ENCODE measurements at regions of chr10 and their contacts with region 1.

Region 1: DNA sequence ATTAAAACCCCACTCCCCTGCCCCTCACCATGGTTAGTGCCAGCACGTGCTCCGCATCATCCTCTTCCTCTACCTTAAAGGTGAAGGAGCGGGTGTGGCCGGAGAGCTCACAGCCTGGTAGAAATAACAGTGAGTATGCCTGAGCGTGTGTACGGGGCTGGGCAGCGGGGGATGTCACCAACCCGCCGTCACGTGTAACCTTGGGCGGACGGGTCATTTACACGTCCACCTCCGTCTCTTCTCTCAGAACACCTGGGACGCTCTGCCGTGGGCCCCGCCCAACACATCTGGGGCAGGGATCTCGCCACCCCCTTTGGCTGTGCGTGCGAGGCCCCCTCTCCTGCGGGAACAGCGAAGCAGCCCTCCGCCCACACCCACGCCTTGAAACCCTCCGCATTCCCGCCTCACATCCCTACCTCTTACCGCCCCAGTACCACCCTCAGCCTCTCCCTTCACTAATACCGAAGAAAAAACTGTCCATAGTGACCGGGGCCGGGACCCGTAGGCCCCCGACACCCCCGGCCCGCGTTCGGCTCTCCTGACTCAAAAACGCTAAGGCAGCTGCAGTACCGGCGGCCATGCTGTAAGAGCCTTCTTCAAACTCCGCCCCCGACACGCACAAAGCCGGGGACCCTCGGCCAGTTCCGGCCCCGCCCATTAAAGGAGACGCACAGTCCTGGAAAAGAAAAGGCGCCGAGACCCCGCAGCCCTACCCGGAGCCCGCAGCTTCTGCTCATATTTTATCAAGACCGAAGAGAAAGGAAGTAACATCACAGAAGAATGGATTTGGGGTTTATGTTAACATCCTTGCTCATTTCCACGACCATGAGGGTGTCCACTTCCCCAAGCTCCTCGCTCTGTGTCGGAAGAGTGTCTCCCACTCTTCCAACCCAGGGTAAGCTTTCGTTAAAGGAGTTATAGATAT is at the start of gene NPM3:
- DNase-seq: peak in 8 of 9 donors; percentile 68 to 84 (median 77)
- ATAC-seq: peak; percentile 82
- H3K4me3 ChIP-seq: peak within 1 kb of the TSS; percentile 68
- H3K4me3 Mint-ChIP-seq: peak within 1 kb of the TSS; percentile 92 to 100 (median 99)
- H3K27ac ChIP-seq: peak within 1 kb of the TSS; percentile 81
- H3K27ac Mint-ChIP-seq: peak within 1 kb of the TSS; percentile 65 to 98 (median 96)
- H3K4me1 ChIP-seq: peaks cover 32 to 49% of the 10 kb centered on the region in 2 donors
- H3K4me1 Mint-ChIP-seq: peaks cover 36 to 76% (median 61%) of the 10 kb centered on the region in 7 donors
- H3K27me3 ChIP-seq: peaks cover 0 to 11% of the 10 kb centered on the region in 2 donors
- H3K27me3 Mint-ChIP-seq: peaks cover 8 to 17% (median 10%) of the 10 kb centered on the region in 5 donors
- total RNA-seq, gene NPM3: 10.9 to 31.3 (median 16.2) TPM

Region 2: GRCh38 chr10:101506829-101507661 is 276.0 kb before region 1 on chr10:
- CTCF ChIA-PET with region 1: no interaction called
- POLR2A ChIA-PET with region 1: no interaction called
- intact Hi-C with region 1: no loop called
- DNase-seq: no peak
- ATAC-seq: no peak
- H3K4me3 ChIP-seq: no peak overlapping the region
- H3K4me3 Mint-ChIP-seq: no peak overlapping the region
- H3K27ac ChIP-seq: no peak overlapping the region
- H3K27ac Mint-ChIP-seq: no peak overlapping the region
- H3K4me1 ChIP-seq: no peaks in the 10 kb centered on the region
- H3K4me1 Mint-ChIP-seq: peaks cover 0 to 23% (median 0%) of the 10 kb centered on the region in 7 donors
- H3K27me3 ChIP-seq: no peaks in the 10 kb centered on the region
- H3K27me3 Mint-ChIP-seq: peaks cover 0 to 9% (median 0%) of the 10 kb centered on the region in 5 donors

Region 3: GRCh38 chr10:101587725-101588653 is 195.1 kb before region 1 on chr10 and contains the starts of genes DPCD and POLL:
- CTCF ChIA-PET with region 1: no interaction called
- POLR2A ChIA-PET with region 1: no interaction called
- intact Hi-C with region 1: loop called in 1 of 2 experiments (anchors 1 kb)
- DNase-seq: peak; percentile 73 to 89 (median 81)
- ATAC-seq: peak; percentile 94
- H3K4me3 ChIP-seq: peak within 1 kb of the TSS; percentile 77
- H3K4me3 Mint-ChIP-seq: peak within 1 kb of the TSS; percentile 92 to 97 (median 95)
- H3K27ac ChIP-seq: peak within 1 kb of the TSS; percentile 69
- H3K27ac Mint-ChIP-seq: peak within 1 kb of the TSS; percentile 71 to 94 (median 89)
- H3K4me1 ChIP-seq: peaks cover 14 to 16% of the 10 kb centered on the region in 2 donors
- H3K4me1 Mint-ChIP-seq: peaks cover 16 to 37% (median 32%) of the 10 kb centered on the region in 7 donors
- H3K27me3 ChIP-seq: no peaks in the 10 kb centered on the region
- H3K27me3 Mint-ChIP-seq: no peaks in the 10 kb centered on the region
- total RNA-seq, gene DPCD: 0.64 to 3.6 (median 1.3) TPM
- total RNA-seq, gene POLL: 34.9 to 65.8 (median 38.8) TPM

Region 4: GRCh38 chr10:101655570-101655969 is 127.5 kb before region 1 on chr10:
- CTCF ChIA-PET with region 1: no interaction called
- POLR2A ChIA-PET with region 1: no interaction called
- intact Hi-C with region 1: no loop called
- DNase-seq: no peak
- ATAC-seq: no peak
- H3K4me3 ChIP-seq: no peak overlapping the region
- H3K4me3 Mint-ChIP-seq: no peak overlapping the region
- H3K27ac ChIP-seq: no peak overlapping the region
- H3K27ac Mint-ChIP-seq: peak overlapping the region in 1 of 9 donors; percentile 36
- H3K4me1 ChIP-seq: no peaks in the 10 kb centered on the region
- H3K4me1 Mint-ChIP-seq: peaks cover 0 to 11% (median 5%) of the 10 kb centered on the region in 7 donors
- H3K27me3 ChIP-seq: no peaks in the 10 kb centered on the region
- H3K27me3 Mint-ChIP-seq: no peaks in the 10 kb centered on the region

Region 5: DNA sequence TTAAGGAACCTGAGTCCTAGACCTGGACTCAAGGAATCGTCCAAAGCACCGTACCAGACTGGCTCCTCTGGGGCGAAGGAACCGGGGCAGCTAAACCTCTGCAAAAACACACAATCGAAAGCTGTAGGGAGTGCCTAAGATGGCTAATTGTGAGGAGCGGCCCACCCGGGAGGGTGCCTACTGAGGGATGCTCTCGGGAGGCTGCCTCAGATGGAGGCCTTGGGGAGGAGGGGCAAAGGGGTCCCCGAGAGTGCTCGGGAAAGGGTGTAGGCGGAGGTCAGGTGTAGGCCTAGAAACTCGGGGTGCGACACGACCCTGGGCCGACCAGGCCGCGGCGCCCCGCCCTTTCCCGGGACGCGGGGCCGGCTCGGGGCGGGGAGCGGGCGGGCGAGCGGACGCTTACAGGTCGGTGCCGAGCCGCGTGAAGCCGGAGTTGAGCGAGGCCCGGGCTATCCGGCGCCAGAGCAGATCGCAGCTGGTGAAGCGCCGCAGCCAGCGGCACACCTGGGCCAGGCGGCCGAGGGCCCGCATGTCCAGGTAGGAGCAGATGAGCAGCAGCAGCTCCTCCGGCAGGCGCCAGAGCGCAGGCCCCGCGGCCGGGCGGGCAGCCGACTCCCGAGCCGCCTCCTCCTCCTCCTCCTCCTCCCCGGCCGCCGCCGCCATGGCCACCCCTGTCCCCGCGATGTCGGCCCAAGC is 88.9 kb before region 1 on chr10:
- CTCF ChIA-PET with region 1: interaction called, 5 read pairs
- POLR2A ChIA-PET with region 1: interaction called, 8 read pairs
- intact Hi-C with region 1: loop called (anchors 1 to 2 kb)
- DNase-seq: peak; percentile 60 to 81 (median 73)
- ATAC-seq: peak; percentile 77
- H3K4me3 ChIP-seq: peak overlapping the region; percentile 57
- H3K4me3 Mint-ChIP-seq: peak overlapping the region; percentile 93 to 98 (median 96)
- H3K27ac ChIP-seq: peak overlapping the region; percentile 99
- H3K27ac Mint-ChIP-seq: peak overlapping the region; percentile 94 to 100 (median 99)
- H3K4me1 ChIP-seq: peaks cover 21 to 28% of the 10 kb centered on the region in 2 donors
- H3K4me1 Mint-ChIP-seq: peaks cover 33 to 59% (median 45%) of the 10 kb centered on the region in 7 donors
- H3K27me3 ChIP-seq: no peaks in the 10 kb centered on the region
- H3K27me3 Mint-ChIP-seq: no peaks in the 10 kb centered on the region

Region 6: GRCh38 chr10:101840741-101841453 is 57.8 kb after region 1 on chr10:
- CTCF ChIA-PET with region 1: interaction called, 15 read pairs
- POLR2A ChIA-PET with region 1: no interaction called
- intact Hi-C with region 1: loop called in 1 of 2 experiments (anchors 1 kb)
- DNase-seq: peak; percentile 35 to 83 (median 58)
- ATAC-seq: peak; percentile 76
- H3K4me3 ChIP-seq: peak overlapping the region; percentile 55
- H3K4me3 Mint-ChIP-seq: peak overlapping the region; percentile 72 to 91 (median 85)
- H3K27ac ChIP-seq: no peak overlapping the region
- H3K27ac Mint-ChIP-seq: peak overlapping the region in 5 of 9 donors; percentile 50 to 87 (median 79)
- H3K4me1 ChIP-seq: peaks cover 13 to 36% of the 10 kb centered on the region in 2 donors
- H3K4me1 Mint-ChIP-seq: peaks cover 34 to 65% (median 55%) of the 10 kb centered on the region in 7 donors
- H3K27me3 ChIP-seq: no peaks in the 10 kb centered on the region
- H3K27me3 Mint-ChIP-seq: peaks cover 0 to 19% (median 4%) of the 10 kb centered on the region in 5 donors

Region 7: DNA sequence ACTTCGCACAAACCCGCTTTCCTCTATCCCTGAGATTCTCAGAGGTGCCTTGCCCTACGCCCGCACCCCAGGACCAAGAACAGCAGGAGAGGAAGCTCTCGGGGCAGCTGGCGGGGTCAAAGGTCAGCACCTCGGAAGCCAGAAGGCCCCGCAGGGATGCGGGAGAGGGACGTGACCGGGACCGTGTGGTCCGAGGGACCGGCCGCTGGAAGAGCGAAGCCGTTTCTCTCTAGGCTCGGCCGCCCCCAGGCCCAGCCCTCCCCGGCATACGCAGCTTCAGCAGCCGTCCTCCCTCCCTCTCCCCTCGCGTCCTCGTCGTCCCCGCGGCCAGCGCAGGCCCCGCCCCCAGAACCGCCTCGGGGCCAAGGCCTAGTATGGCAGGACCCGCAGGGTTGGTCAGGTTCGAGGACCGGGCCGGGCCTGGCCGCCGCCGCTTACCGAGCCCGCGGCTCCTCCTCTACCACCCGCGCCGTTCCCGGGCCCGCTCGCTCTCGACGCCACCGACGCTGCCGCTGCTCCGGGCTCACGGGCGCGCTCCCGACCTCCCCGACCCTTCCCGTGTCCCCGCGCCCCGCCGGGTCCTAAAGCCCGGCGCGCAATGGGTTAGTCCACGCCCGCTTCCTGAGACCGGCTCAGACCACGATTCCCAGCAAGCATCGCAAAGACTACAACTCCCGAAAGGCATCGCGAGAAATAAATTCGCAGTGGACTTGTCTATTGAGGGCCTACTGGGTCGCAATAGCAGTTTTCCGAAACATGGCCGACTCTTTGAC is 272.8 kb after region 1 on chr10 and contains the start of gene ARMH3:
- CTCF ChIA-PET with region 1: no interaction called
- POLR2A ChIA-PET with region 1: no interaction called
- intact Hi-C with region 1: loop called in 1 of 2 experiments (anchors 2 kb)
- DNase-seq: peak; percentile 72 to 90 (median 87)
- ATAC-seq: peak; percentile 98
- H3K4me3 ChIP-seq: peak within 1 kb of the TSS; percentile 92
- H3K4me3 Mint-ChIP-seq: peak within 1 kb of the TSS; percentile 89 to 98 (median 94)
- H3K27ac ChIP-seq: peak within 1 kb of the TSS; percentile 87
- H3K27ac Mint-ChIP-seq: peak within 1 kb of the TSS; percentile 76 to 97 (median 92)
- H3K4me1 ChIP-seq: peaks cover 18 to 20% of the 10 kb centered on the region in 2 donors
- H3K4me1 Mint-ChIP-seq: peaks cover 25 to 50% (median 42%) of the 10 kb centered on the region in 7 donors
- H3K27me3 ChIP-seq: no peaks in the 10 kb centered on the region
- H3K27me3 Mint-ChIP-seq: no peaks in the 10 kb centered on the region
- total RNA-seq, gene ARMH3: 26.7 to 34.0 (median 28.8) TPM

Region 8: DNA sequence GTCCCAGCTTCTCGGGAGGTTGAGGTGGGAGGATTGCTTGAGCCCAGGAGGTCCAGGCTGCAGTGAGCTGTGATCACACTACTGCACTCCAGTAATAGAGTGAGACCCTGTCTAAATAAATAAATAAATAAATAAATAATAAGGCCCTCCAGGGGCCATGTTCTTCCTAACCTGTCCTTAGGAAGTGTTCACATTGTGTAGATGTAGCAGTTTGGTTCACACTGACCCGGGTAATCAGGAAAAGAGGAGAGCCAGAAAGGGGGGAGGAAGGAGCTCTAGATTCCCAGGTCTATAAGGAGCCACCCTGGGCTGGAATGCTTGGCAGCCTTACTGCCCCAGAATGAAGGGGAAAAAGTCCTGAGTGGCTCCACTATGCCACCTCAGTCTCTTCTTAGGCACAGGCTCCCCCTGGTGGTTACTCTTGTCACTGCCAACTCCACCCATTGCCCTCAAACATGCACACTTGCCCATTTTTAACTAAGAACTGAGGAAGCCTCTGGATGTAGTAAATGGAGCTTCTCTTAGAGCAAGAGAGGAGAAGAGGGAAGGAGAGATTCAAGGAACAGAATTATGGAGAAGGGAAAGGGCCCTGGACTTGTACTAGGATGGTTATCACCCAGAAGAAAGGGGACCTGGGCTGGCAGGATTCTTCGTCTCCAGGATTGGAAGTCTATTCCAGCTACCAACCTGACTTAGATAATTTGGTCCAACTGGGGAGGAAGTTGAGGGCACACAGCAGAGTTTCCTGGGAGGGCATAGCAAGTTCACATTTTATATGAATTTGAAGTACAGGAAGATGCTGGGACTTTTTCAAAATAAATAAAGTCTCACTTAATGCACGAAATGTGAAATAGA is 289.8 kb after region 1 on chr10:
- CTCF ChIA-PET with region 1: interaction called, 4 read pairs
- POLR2A ChIA-PET with region 1: no interaction called
- intact Hi-C with region 1: loop called (anchors 1 to 2 kb)
- DNase-seq: peak; percentile 54 to 81 (median 73)
- ATAC-seq: peak; percentile 94
- H3K4me3 ChIP-seq: no peak overlapping the region
- H3K4me3 Mint-ChIP-seq: no peak overlapping the region
- H3K27ac ChIP-seq: no peak overlapping the region
- H3K27ac Mint-ChIP-seq: peak overlapping the region in 1 of 9 donors; percentile 13
- H3K4me1 ChIP-seq: no peaks in the 10 kb centered on the region
- H3K4me1 Mint-ChIP-seq: peaks cover 0 to 17% (median 13%) of the 10 kb centered on the region in 7 donors
- H3K27me3 ChIP-seq: no peaks in the 10 kb centered on the region
- H3K27me3 Mint-ChIP-seq: no peaks in the 10 kb centered on the region

Measured in naive thymus-derived CD4-positive, alpha-beta T cell (primary cell).